CD14-positive monocyte (primary cell): ENCODE measurements at regions of chr17 and their contacts with region 1.

Region 1: GRCh38 chr17:1455797-1456599 is at the start of gene CRK:
- DNase-seq: peak; percentile 96 to 97 (median 96)
- H3K4me3 ChIP-seq: peak within 1 kb of the TSS; percentile 87 to 98 (median 91)
- H3K4me3 Mint-ChIP-seq: peak within 1 kb of the TSS; percentile 95 to 96
- H3K27ac ChIP-seq: peak within 1 kb of the TSS; percentile 87 to 96
- H3K27ac Mint-ChIP-seq: peak within 1 kb of the TSS; percentile 83 to 97 (median 93)
- H3K4me1 ChIP-seq: peaks cover 36 to 51% of the 10 kb centered on the region in 2 donors
- H3K4me1 Mint-ChIP-seq: peaks cover 54% of the 10 kb centered on the region
- H3K27me3 ChIP-seq: peaks cover 2 to 22% of the 10 kb centered on the region in 2 donors
- H3K27me3 Mint-ChIP-seq: peaks cover 30 to 42% (median 41%) of the 10 kb centered on the region in 3 donors
- CTCF ChIP-seq: no peak
- polyA plus RNA-seq, gene CRK: 22.3 to 28.0 (median 26.5) TPM

Region 2: GRCh38 chr17:1137465-1137894 is 318.5 kb before region 1 on chr17:
- intact Hi-C with region 1: no loop called
- DNase-seq: no peak
- H3K4me3 ChIP-seq: no peak overlapping the region
- H3K4me3 Mint-ChIP-seq: no peak overlapping the region
- H3K27ac ChIP-seq: no peak overlapping the region
- H3K27ac Mint-ChIP-seq: peak overlapping the region in 1 of 7 donors; percentile 66
- H3K4me1 ChIP-seq: no peaks in the 10 kb centered on the region
- H3K4me1 Mint-ChIP-seq: peaks cover 15% of the 10 kb centered on the region
- H3K27me3 ChIP-seq: no peaks in the 10 kb centered on the region
- H3K27me3 Mint-ChIP-seq: no peaks in the 10 kb centered on the region
- CTCF ChIP-seq: no peak

Region 3: DNA sequence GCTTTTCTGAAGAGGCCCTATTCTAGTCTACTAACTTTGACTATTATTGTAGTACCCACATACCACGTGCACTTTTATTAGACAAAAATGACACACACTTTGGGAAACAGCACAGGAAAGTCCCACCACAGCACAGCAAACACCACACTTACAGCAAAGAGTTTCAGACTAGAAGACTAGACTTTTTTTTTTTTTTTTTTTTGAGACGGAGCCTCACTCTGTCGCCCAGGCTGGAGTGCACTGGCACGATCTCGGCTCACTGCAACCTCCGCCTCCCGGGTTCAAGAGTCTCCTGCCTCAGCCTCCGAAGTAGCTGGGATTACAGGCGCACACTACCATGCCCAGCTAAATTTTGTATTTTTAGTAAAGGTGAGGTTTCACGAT is 76.1 kb before region 1 on chr17:
- intact Hi-C with region 1: no loop called
- DNase-seq: peak in 1 of 3 donors; percentile 34
- H3K4me3 ChIP-seq: no peak overlapping the region
- H3K4me3 Mint-ChIP-seq: no peak overlapping the region
- H3K27ac ChIP-seq: no peak overlapping the region
- H3K27ac Mint-ChIP-seq: peak overlapping the region in 6 of 7 donors; percentile 8 to 78 (median 22)
- H3K4me1 ChIP-seq: peaks cover 0 to 4% of the 10 kb centered on the region in 2 donors
- H3K4me1 Mint-ChIP-seq: peaks cover 50% of the 10 kb centered on the region
- H3K27me3 ChIP-seq: no peaks in the 10 kb centered on the region
- H3K27me3 Mint-ChIP-seq: no peaks in the 10 kb centered on the region
- CTCF ChIP-seq: no peak

Region 4: DNA sequence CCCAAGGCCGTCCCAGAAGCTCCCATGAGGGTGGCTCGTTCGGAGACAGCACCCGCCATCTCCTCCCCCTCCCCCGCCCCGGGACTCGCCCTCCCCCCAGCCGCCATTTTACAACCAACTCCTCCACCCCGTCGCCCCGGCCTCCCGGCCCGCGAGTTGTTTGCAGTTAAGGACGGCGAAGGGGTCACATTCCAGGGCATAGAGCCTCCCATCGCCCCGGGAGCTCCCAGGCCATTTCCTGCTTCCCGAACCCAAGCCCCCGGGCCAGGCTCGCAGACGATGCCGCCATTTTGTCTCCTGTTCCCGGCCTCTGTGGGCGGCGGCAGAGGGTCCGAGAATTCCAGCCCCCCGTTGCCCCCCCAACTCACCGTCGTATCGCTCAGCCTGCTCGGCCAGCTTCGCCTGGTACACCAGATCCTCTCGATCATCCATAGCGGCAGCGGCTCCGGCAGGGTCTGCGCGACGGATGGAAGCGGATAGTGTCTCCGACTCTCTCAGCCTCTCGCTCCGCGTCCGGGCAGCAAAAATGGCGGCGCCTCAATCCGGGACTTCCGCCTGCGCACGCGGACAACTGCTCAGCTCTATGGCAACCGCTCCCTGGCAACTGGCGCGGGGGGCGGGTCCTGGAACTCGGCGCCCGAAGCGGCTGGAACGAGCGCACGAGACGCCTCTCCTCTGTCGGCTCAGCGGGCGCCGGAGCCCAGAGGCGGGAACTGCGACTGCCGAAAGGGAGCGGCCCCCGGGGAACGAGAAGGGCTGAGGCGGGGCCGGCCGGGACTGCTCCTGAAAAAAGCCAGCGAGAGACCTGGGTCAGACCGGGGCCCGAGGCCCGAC is 56.1 kb before region 1 on chr17 and contains the start of gene YWHAE:
- intact Hi-C with region 1: loop called in 1 of 2 experiments (anchors 5 kb)
- DNase-seq: peak; percentile 92 to 96 (median 96)
- H3K4me3 ChIP-seq: peak within 1 kb of the TSS; percentile 81 to 100 (median 85)
- H3K4me3 Mint-ChIP-seq: peak within 1 kb of the TSS; percentile 96 to 97
- H3K27ac ChIP-seq: peak within 1 kb of the TSS; percentile 86 to 91
- H3K27ac Mint-ChIP-seq: peak within 1 kb of the TSS; percentile 97 to 99 (median 99)
- H3K4me1 ChIP-seq: peaks cover 35 to 41% of the 10 kb centered on the region in 2 donors
- H3K4me1 Mint-ChIP-seq: peaks cover 42% of the 10 kb centered on the region
- H3K27me3 ChIP-seq: no peaks in the 10 kb centered on the region
- H3K27me3 Mint-ChIP-seq: peaks cover 2 to 9% (median 3%) of the 10 kb centered on the region in 3 donors
- CTCF ChIP-seq: no peak
- polyA plus RNA-seq, gene YWHAE: 165 to 185 (median 168) TPM

Region 5: GRCh38 chr17:1490643-1491442 is 34.8 kb after region 1 on chr17:
- intact Hi-C with region 1: loop called (anchors 5 kb)
- DNase-seq: peak in 2 of 3 donors; percentile 29 to 51
- H3K4me3 ChIP-seq: peak overlapping the region; percentile 51 to 86 (median 59)
- H3K4me3 Mint-ChIP-seq: peak overlapping the region; percentile 81 to 94
- H3K27ac ChIP-seq: peak overlapping the region in 1 of 2 donors; percentile 66
- H3K27ac Mint-ChIP-seq: peak overlapping the region in 4 of 7 donors; percentile 37 to 75 (median 60)
- H3K4me1 ChIP-seq: peaks cover 56 to 67% of the 10 kb centered on the region in 2 donors
- H3K4me1 Mint-ChIP-seq: peaks cover 50% of the 10 kb centered on the region
- H3K27me3 ChIP-seq: peaks cover 10 to 52% of the 10 kb centered on the region in 2 donors
- H3K27me3 Mint-ChIP-seq: peaks cover 41 to 75% (median 58%) of the 10 kb centered on the region in 3 donors
- CTCF ChIP-seq: no peak

Region 6: GRCh38 chr17:1516388-1517161 is 60.6 kb after region 1 on chr17 and contains the start of gene INPP5K:
- intact Hi-C with region 1: loop called (anchors 1 to 2 kb)
- DNase-seq: peak; percentile 98 to 99 (median 99)
- H3K4me3 ChIP-seq: peak within 1 kb of the TSS; percentile 73 to 99 (median 87)
- H3K4me3 Mint-ChIP-seq: peak within 1 kb of the TSS; percentile 90 to 94
- H3K27ac ChIP-seq: peak within 1 kb of the TSS; percentile 54 to 95
- H3K27ac Mint-ChIP-seq: peak within 1 kb of the TSS; percentile 91 to 95 (median 93)
- H3K4me1 ChIP-seq: peaks cover 22 to 29% of the 10 kb centered on the region in 2 donors
- H3K4me1 Mint-ChIP-seq: peaks cover 18% of the 10 kb centered on the region
- H3K27me3 ChIP-seq: no peaks in the 10 kb centered on the region
- H3K27me3 Mint-ChIP-seq: no peaks in the 10 kb centered on the region
- CTCF ChIP-seq: no peak
- polyA plus RNA-seq, gene INPP5K: 50.3 to 58.7 (median 53.0) TPM